ENCODE measurements at regions of chr5 and their contacts with region 1.

Region 1: GRCh38 chr5:81420039-81420667 is 26.2 kb upstream of the ACOT12 start:
- DNase-seq: peak; percentile 24 to 75
- H3K4me3 ChIP-seq: no peak overlapping the region
- H3K27ac ChIP-seq: peak overlapping the region; percentile 42
- H3K4me1 ChIP-seq: peaks cover 33% of the 10 kb centered on the region
- H3K27me3 ChIP-seq: no peaks in the 10 kb centered on the region
- CTCF ChIP-seq: no peak

Region 2: GRCh38 chr5:81301271-81302015 is 118.7 kb before region 1 on chr5 and contains the start of gene ZCCHC9:
- CTCF ChIA-PET with region 1: no interaction called
- POLR2A ChIA-PET with region 1: interaction called, 11 read pairs
- intact Hi-C with region 1: no loop called
- DNase-seq: peak; percentile 82 to 83
- H3K4me3 ChIP-seq: peak within 1 kb of the TSS; percentile 81
- H3K27ac ChIP-seq: peak within 1 kb of the TSS; percentile 48
- H3K4me1 ChIP-seq: peaks cover 27% of the 10 kb centered on the region
- H3K27me3 ChIP-seq: no peaks in the 10 kb centered on the region
- CTCF ChIP-seq: no peak; the same call in 1 of the 2 replicates
- total RNA-seq, gene ZCCHC9: 22.0 and 30.1 TPM in 2 replicates

Region 3: GRCh38 chr5:82185851-82186250 is 765.7 kb after region 1 on chr5:
- CTCF ChIA-PET with region 1: no interaction called
- POLR2A ChIA-PET with region 1: no interaction called
- intact Hi-C with region 1: no loop called
- DNase-seq: no peak
- H3K4me3 ChIP-seq: no peak overlapping the region
- H3K27ac ChIP-seq: no peak overlapping the region
- H3K4me1 ChIP-seq: no peaks in the 10 kb centered on the region
- H3K27me3 ChIP-seq: no peaks in the 10 kb centered on the region
- CTCF ChIP-seq: no peak

Measured in PC-9 (cell line).